ENCODE measurements at regions of chr13 and their contacts with region 1.

Region 1: DNA sequence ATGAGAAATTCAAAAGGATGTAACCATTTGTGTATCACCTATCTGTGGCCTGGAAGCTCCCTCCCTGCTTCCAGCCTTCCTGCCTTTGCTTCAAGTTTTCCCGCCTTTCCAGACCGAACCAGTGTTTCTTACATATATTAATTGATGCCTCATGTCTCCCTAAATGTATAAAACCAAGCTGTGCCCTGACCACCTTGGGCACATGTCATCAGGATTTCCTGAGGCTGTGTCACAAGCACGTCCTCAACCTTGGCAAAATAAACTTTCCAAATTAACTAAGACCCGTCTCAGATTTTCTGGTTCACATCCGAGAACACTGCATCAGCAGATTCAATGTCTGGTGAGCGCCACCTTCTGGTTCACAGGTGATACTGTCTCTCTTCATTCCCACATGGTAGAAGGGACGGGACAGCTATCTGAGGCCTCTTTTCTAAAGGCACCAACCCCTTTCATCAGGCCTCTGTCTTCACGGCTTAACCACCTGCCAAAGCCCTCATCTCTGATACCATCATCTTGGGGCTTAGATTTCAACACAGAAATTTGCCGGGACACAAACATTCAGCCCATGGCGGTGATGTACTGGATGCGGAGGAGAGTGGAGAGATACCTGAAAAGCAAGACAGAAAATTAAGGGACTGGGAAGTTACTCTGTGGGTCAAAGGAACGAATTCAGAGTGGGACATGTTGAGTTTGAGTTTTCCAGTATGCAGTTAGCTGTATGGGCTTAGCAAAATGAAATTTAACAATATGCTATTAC is 58.7 kb upstream of the PABPC3 start:
- DNase-seq: peak; percentile 42
- H3K4me3 Mint-ChIP-seq: no peak overlapping the region
- H3K27ac Mint-ChIP-seq: no peak overlapping the region
- H3K4me1 Mint-ChIP-seq: peaks cover 1% of the 10 kb centered on the region
- H3K27me3 Mint-ChIP-seq: peaks cover 30% of the 10 kb centered on the region

Region 2: GRCh38 chr13:24995226-24995804 is 41.9 kb before region 1 on chr13:
- intact Hi-C with region 1: loop called (anchors 2 kb)
- DNase-seq: peak; percentile 49
- H3K4me3 Mint-ChIP-seq: no peak overlapping the region
- H3K27ac Mint-ChIP-seq: no peak overlapping the region
- H3K4me1 Mint-ChIP-seq: peaks cover 5% of the 10 kb centered on the region
- H3K27me3 Mint-ChIP-seq: peaks cover 31% of the 10 kb centered on the region

Region 3: GRCh38 chr13:25001476-25002206 is 35.6 kb before region 1 on chr13:
- intact Hi-C with region 1: loop called (anchors 1 kb)
- DNase-seq: no peak
- H3K4me3 Mint-ChIP-seq: no peak overlapping the region
- H3K27ac Mint-ChIP-seq: no peak overlapping the region
- H3K4me1 Mint-ChIP-seq: peaks cover 2% of the 10 kb centered on the region
- H3K27me3 Mint-ChIP-seq: peaks cover 47% of the 10 kb centered on the region